PC-3 (cell line): ENCODE measurements at regions of chr20 and their contacts with region 1.

Region 1: GRCh38 chr20:19974626-19975435 is 42.3 kb upstream of the NAA20 start:
- DNase-seq: peak; percentile 87
- ATAC-seq: peak; percentile 56
- H3K4me3 ChIP-seq: peak overlapping the region; percentile 87
- H3K27ac ChIP-seq: peak overlapping the region; percentile 93
- H3K4me1 ChIP-seq: peaks cover 42% of the 10 kb centered on the region
- H3K27me3 ChIP-seq: no peaks in the 10 kb centered on the region
- CTCF ChIP-seq: no peak

Region 2: DNA sequence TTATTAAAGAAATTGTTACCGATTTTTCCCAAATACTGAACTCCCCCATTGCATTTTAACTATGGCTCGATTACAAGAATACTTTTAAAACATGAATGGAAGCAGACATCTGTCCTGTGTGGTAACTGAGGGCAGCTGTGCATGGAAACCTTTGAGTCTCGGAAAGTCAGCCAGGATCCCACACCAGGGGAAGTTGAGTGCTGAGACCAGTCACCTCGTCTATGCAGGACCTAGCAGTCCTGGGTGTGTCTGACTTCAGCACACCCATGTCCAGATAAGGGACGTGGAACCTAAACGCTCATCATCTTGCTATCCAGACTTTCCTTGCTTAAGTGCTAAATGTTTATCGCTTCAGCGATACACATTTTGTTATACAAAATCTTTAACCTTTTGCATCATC is 210.6 kb before region 1 on chr20:
- CTCF ChIA-PET with region 1: no interaction called
- POLR2A ChIA-PET with region 1: no interaction called
- intact Hi-C with region 1: no loop called
- DNase-seq: no peak
- ATAC-seq: no peak
- H3K4me3 ChIP-seq: no peak overlapping the region
- H3K27ac ChIP-seq: no peak overlapping the region
- H3K4me1 ChIP-seq: peaks cover 43% of the 10 kb centered on the region
- H3K27me3 ChIP-seq: no peaks in the 10 kb centered on the region
- CTCF ChIP-seq: no peak

Region 3: GRCh38 chr20:19880256-19881079 is 94.4 kb before region 1 on chr20:
- CTCF ChIA-PET with region 1: no interaction called
- POLR2A ChIA-PET with region 1: interaction called, 8 read pairs
- intact Hi-C with region 1: loop called (anchors 2 kb)
- DNase-seq: peak; percentile 95
- ATAC-seq: peak; percentile 86
- H3K4me3 ChIP-seq: peak overlapping the region; percentile 29; the same call in 1 of the 2 replicates
- H3K27ac ChIP-seq: peak overlapping the region; percentile 96
- H3K4me1 ChIP-seq: peaks cover 50% of the 10 kb centered on the region
- H3K27me3 ChIP-seq: no peaks in the 10 kb centered on the region
- CTCF ChIP-seq: no peak

Region 4: DNA sequence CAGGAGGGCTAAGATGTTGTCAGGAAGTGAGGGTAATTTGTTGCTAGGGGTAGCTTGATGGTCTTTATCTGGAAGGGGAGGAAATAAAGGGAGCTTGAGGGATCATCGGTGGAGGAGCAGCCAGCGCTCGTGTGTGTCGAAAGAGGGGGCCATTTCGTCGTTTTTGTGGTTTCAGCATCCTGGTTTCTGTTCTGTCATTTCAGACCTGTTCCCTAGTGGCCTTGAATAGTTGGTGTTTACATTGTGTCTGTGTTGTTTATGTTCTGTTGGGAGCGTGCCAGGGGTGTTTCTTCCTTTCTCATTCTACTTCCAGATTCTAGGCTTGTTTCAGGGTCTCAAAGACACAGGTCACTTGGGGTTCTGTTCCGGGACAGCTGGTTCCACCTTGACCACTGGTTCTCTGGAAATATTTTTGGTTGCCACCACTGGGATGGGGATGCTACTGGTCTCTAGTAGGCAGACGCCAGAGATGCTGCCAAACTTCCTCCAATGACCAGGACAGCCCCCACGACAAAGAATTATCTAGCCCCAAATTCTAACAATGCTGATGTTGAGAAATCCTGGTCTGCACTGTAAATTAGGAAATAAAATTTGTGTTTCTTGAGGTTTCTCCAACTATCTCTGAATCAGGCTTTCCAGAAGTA is 71.5 kb before region 1 on chr20:
- CTCF ChIA-PET with region 1: no interaction called
- POLR2A ChIA-PET with region 1: interaction called, 10 read pairs
- intact Hi-C with region 1: no loop called
- DNase-seq: no peak
- ATAC-seq: no peak
- H3K4me3 ChIP-seq: no peak overlapping the region
- H3K27ac ChIP-seq: no peak overlapping the region
- H3K4me1 ChIP-seq: peaks cover 8% of the 10 kb centered on the region
- H3K27me3 ChIP-seq: no peaks in the 10 kb centered on the region
- CTCF ChIP-seq: no peak

Region 5: GRCh38 chr20:19932170-19932667 is 42.6 kb before region 1 on chr20:
- CTCF ChIA-PET with region 1: no interaction called
- POLR2A ChIA-PET with region 1: no interaction called
- intact Hi-C with region 1: no loop called
- DNase-seq: no peak
- ATAC-seq: no peak
- H3K4me3 ChIP-seq: no peak overlapping the region
- H3K27ac ChIP-seq: no peak overlapping the region
- H3K4me1 ChIP-seq: peaks cover 22% of the 10 kb centered on the region
- H3K27me3 ChIP-seq: no peaks in the 10 kb centered on the region
- CTCF ChIP-seq: no peak

Region 6: GRCh38 chr20:20010639-20011500 is 36.0 kb after region 1 on chr20:
- CTCF ChIA-PET with region 1: no interaction called
- POLR2A ChIA-PET with region 1: interaction called, 3 read pairs
- intact Hi-C with region 1: loop called (anchors 2 kb)
- DNase-seq: peak; percentile 77
- ATAC-seq: peak; percentile 83
- H3K4me3 ChIP-seq: peak overlapping the region; percentile 45
- H3K27ac ChIP-seq: peak overlapping the region; percentile 58
- H3K4me1 ChIP-seq: peaks cover 26% of the 10 kb centered on the region
- H3K27me3 ChIP-seq: no peaks in the 10 kb centered on the region
- CTCF ChIP-seq: no peak